CD8-positive, alpha-beta memory T cell (primary cell): ENCODE measurements at regions of chr16 and their contacts with region 1.

Region 1: DNA sequence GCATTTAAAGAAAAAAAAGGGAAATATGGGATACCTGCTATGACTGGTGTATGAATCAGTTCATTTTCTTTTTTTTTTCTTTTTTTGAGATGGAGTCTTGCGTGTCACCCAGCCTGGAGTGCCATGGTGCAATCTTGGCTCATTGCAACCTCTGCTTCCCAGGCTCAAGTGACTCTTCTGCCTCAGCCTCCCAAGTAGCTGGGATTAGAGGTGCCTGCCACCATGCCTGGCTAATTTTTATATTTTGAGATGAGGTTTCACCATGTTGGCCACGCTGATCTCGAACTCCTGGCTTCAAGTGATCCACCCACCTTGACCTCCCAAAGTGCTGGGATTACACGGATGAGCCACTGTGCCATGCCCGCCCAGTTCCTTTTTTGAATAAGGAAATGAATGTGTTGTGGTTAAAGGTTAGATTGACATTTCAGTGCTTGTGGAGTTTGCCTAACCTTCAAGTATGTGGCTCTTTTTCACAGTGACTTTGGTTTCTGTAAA is 7.7 kb downstream of the HAPSTR1 start:
- DNase-seq: no peak
- H3K4me3 ChIP-seq: no peak overlapping the region
- H3K4me3 Mint-ChIP-seq: peak overlapping the region; percentile 66 to 86 (median 81)
- H3K27ac ChIP-seq: no peak overlapping the region
- H3K27ac Mint-ChIP-seq: peak overlapping the region in 7 of 8 donors; percentile 25 to 90 (median 78)
- H3K4me1 ChIP-seq: peaks cover 94% of the 10 kb centered on the region
- H3K4me1 Mint-ChIP-seq: peaks cover 88 to 96% (median 95%) of the 10 kb centered on the region in 3 donors
- H3K27me3 ChIP-seq: no peaks in the 10 kb centered on the region
- H3K27me3 Mint-ChIP-seq: peaks cover 0 to 2% of the 10 kb centered on the region in 2 donors

Region 2: DNA sequence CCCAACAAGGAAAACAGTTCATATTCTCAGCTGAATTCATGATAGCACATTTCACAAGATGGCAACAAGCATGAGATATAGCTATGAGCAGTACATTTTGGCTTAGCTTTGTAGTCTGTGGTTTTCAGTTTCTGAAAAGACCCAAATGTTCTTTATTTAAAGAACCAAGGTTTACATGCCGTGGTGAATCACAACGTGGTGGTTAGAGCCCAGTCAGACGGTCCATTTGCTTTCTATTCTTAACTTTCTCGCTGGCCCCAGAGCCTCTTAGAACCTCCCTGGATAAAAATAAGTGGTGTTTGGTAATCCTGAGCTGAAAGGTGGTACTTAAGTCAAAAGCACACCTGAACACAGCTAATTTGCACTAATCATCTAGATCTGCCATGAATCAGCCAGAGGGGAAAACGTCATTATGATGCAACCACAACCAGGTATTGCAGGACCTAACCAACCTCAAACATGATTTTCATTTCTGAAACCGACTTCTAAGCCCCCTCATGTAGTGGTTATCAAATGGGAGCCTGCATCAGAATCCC is 26.3 kb before region 1 on chr16:
- CTCF ChIA-PET with region 1: no interaction called
- POLR2A ChIA-PET with region 1: no interaction called
- DNase-seq: no peak
- H3K4me3 ChIP-seq: no peak overlapping the region
- H3K4me3 Mint-ChIP-seq: no peak overlapping the region
- H3K27ac ChIP-seq: no peak overlapping the region
- H3K27ac Mint-ChIP-seq: peak overlapping the region in 1 of 8 donors; percentile 61
- H3K4me1 ChIP-seq: peaks cover 6% of the 10 kb centered on the region
- H3K4me1 Mint-ChIP-seq: peaks cover 4 to 12% (median 9%) of the 10 kb centered on the region in 3 donors
- H3K27me3 ChIP-seq: no peaks in the 10 kb centered on the region
- H3K27me3 Mint-ChIP-seq: peaks cover 3 to 4% of the 10 kb centered on the region in 2 donors

Region 3: DNA sequence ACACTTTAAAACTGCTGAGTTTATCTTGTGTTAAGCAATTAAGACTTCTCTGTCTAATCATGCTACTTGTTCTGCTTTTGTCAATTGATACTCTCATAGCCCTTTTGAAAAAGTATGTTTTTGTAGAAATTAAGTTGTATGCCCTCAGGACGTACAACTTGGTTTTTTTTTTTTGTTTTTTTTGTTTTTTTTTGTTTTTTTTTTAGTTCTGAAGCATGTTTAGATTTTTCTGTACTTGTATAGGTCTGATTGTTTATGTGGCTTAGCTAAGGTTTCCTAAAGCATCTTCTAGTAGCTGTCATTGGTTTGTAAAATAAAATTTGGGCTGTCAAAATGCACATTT is 13.6 kb after region 1 on chr16:
- CTCF ChIA-PET with region 1: interaction called, 3 read pairs
- POLR2A ChIA-PET with region 1: interaction called, 10 read pairs
- DNase-seq: no peak
- H3K4me3 ChIP-seq: no peak overlapping the region
- H3K4me3 Mint-ChIP-seq: peak overlapping the region in 5 of 7 donors; percentile 16 to 85 (median 69)
- H3K27ac ChIP-seq: no peak overlapping the region
- H3K27ac Mint-ChIP-seq: peak overlapping the region in 7 of 8 donors; percentile 47 to 86 (median 79)
- H3K4me1 ChIP-seq: peaks cover 72% of the 10 kb centered on the region
- H3K4me1 Mint-ChIP-seq: peaks cover 93 to 100% (median 97%) of the 10 kb centered on the region in 3 donors
- H3K27me3 ChIP-seq: no peaks in the 10 kb centered on the region
- H3K27me3 Mint-ChIP-seq: no peaks in the 10 kb centered on the region

Region 4: DNA sequence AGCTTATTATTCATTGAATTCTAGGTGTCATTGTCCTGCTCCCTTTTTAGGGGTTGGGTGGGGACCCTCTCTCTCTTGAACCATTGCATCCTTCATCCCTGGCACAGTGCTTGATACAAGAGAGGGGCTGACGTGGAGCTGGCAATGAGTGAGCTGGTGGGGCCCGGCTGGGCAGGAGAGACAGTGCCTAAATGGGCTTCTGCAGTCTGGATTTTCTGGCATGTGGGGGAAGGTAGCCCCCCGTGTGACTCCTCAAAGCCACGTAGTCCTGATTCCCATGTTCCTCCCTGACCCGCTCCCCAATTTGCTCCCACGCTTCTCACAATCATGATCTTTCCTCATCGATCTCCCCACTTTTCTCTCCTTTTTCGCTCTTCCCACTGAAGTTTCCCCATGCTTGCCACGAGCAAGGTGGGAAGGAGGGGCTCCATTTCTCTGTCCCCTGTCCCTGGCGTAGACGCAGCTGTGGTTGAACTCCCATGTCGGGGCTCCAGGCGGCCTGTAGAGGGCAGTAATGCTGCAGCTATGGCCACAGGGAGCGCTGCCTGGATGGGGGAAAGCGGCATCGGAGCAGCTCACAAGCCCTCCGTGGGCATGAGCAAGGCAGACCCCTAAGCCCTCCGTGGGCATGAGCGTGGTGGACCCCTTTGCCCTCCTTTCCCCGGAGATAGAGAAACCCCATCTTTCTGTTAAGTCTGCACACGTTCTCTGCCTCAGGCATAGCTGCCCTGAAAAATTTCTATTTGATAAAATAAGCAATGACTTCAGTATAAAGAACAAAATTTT is 39.7 kb after region 1 on chr16:
- CTCF ChIA-PET with region 1: interaction called, 14 read pairs
- POLR2A ChIA-PET with region 1: no interaction called
- DNase-seq: peak; percentile 46 to 74 (median 54)
- H3K4me3 ChIP-seq: no peak overlapping the region
- H3K4me3 Mint-ChIP-seq: peak overlapping the region in 5 of 7 donors; percentile 7 to 51 (median 29)
- H3K27ac ChIP-seq: no peak overlapping the region
- H3K27ac Mint-ChIP-seq: peak overlapping the region in 2 of 8 donors; percentile 88 to 92
- H3K4me1 ChIP-seq: peaks cover 13% of the 10 kb centered on the region
- H3K4me1 Mint-ChIP-seq: peaks cover 26 to 34% (median 27%) of the 10 kb centered on the region in 3 donors
- H3K27me3 ChIP-seq: peaks cover 4% of the 10 kb centered on the region
- H3K27me3 Mint-ChIP-seq: peaks cover 0 to 9% of the 10 kb centered on the region in 2 donors

Region 5: GRCh38 chr16:9481747-9482730 is 382.9 kb after region 1 on chr16:
- CTCF ChIA-PET with region 1: no interaction called
- POLR2A ChIA-PET with region 1: no interaction called
- DNase-seq: no peak
- H3K4me3 ChIP-seq: no peak overlapping the region
- H3K4me3 Mint-ChIP-seq: no peak overlapping the region
- H3K27ac ChIP-seq: no peak overlapping the region
- H3K27ac Mint-ChIP-seq: no peak overlapping the region
- H3K4me1 ChIP-seq: no peaks in the 10 kb centered on the region
- H3K4me1 Mint-ChIP-seq: no peaks in the 10 kb centered on the region
- H3K27me3 ChIP-seq: peaks cover 4% of the 10 kb centered on the region
- H3K27me3 Mint-ChIP-seq: no peaks in the 10 kb centered on the region